CD8-positive, alpha-beta memory T cell (primary cell): ENCODE measurements at regions of chr2 and their contacts with region 1.

Region 1: GRCh38 chr2:241149925-241150659 is at the start of gene PPP1R7:
- DNase-seq: peak; percentile 92 to 97 (median 93)
- H3K4me3 ChIP-seq: peak within 1 kb of the TSS; percentile 97
- H3K4me3 Mint-ChIP-seq: peak within 1 kb of the TSS; percentile 93 to 100 (median 97)
- H3K27ac ChIP-seq: peak within 1 kb of the TSS; percentile 68
- H3K27ac Mint-ChIP-seq: peak within 1 kb of the TSS; percentile 87 to 99 (median 94)
- H3K4me1 ChIP-seq: peaks cover 26% of the 10 kb centered on the region
- H3K4me1 Mint-ChIP-seq: peaks cover 33 to 58% (median 52%) of the 10 kb centered on the region in 3 donors
- H3K27me3 ChIP-seq: no peaks in the 10 kb centered on the region
- H3K27me3 Mint-ChIP-seq: peaks cover 0 to 3% of the 10 kb centered on the region in 2 donors
- total RNA-seq, gene PPP1R7: 82.6 to 87.2 TPM

Region 2: DNA sequence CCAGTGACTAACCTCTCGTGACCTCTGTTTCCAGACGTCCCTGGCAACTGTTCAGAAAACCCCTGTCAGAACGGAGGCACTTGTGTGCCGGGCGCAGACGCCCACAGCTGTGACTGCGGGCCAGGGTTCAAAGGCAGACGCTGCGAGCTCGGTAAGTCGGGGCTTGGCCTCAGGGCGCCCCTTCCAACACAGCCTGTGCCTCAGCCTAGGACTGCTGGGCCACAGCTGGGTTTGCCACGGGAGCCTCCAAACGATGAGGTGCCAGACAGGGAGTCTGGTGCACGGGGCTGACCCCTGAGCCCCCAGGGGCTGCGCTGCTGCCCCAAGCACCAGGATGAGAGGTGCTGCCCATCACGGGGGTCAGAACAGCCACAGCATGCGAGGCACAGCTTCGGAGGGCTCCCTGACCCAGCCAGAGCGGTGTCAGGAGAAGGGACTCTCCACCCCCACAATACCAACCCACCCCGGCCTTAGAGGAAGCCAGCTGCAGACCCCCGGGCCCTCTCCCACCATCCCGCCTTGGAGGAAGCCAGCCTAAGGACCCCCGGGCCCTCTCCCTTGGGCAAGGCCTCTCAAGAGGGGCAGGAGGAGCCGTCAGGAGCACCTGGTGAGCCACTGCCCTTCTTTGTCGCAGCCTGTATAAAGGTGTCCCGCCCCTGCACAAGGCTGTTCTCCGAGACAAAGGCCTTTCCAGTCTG is 68.3 kb before region 1 on chr2:
- CTCF ChIA-PET with region 1: interaction called, 67 read pairs
- POLR2A ChIA-PET with region 1: interaction called, 22 read pairs
- DNase-seq: no peak
- H3K4me3 ChIP-seq: no peak overlapping the region
- H3K4me3 Mint-ChIP-seq: no peak overlapping the region
- H3K27ac ChIP-seq: no peak overlapping the region
- H3K27ac Mint-ChIP-seq: peak overlapping the region in 5 of 8 donors; percentile 12 to 95 (median 60)
- H3K4me1 ChIP-seq: peaks cover 3% of the 10 kb centered on the region
- H3K4me1 Mint-ChIP-seq: peaks cover 5 to 32% (median 17%) of the 10 kb centered on the region in 3 donors
- H3K27me3 ChIP-seq: no peaks in the 10 kb centered on the region
- H3K27me3 Mint-ChIP-seq: no peaks in the 10 kb centered on the region

Region 3: DNA sequence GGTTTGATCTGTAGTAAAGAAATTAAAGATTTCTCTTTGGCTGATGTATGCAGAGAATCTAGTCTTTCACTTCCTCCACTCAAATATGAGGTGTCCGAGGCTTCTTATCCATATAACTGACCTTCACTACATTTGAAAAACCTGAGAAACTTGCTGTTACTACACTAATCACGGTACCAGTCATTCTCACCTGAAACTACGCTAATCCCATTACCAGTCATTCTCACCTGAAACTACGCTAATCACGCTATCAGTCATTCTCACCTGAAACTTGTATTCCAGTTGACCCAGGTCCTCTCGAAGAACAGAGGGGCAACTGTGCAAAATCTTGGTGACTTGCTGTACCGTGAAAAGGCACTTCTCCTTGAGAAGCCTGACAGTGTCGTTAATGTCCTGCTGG is 53.1 kb before region 1 on chr2:
- CTCF ChIA-PET with region 1: interaction called, 10 read pairs
- POLR2A ChIA-PET with region 1: interaction called, 49 read pairs
- DNase-seq: no peak
- H3K4me3 ChIP-seq: no peak overlapping the region
- H3K4me3 Mint-ChIP-seq: peak overlapping the region in 1 of 7 donors; percentile 61
- H3K27ac ChIP-seq: no peak overlapping the region
- H3K27ac Mint-ChIP-seq: peak overlapping the region; percentile 73 to 94 (median 84)
- H3K4me1 ChIP-seq: peaks cover 58% of the 10 kb centered on the region
- H3K4me1 Mint-ChIP-seq: peaks cover 41 to 84% (median 75%) of the 10 kb centered on the region in 3 donors
- H3K27me3 ChIP-seq: no peaks in the 10 kb centered on the region
- H3K27me3 Mint-ChIP-seq: no peaks in the 10 kb centered on the region

Region 4: GRCh38 chr2:241102239-241102803 is 47.8 kb before region 1 on chr2 and contains the start of gene MTERF4:
- CTCF ChIA-PET with region 1: interaction called, 54 read pairs
- POLR2A ChIA-PET with region 1: interaction called, 49 read pairs
- DNase-seq: peak; percentile 77 to 90 (median 83)
- H3K4me3 ChIP-seq: peak within 1 kb of the TSS; percentile 96
- H3K4me3 Mint-ChIP-seq: peak within 1 kb of the TSS; percentile 95 to 99 (median 97)
- H3K27ac ChIP-seq: peak within 1 kb of the TSS; percentile 77
- H3K27ac Mint-ChIP-seq: peak within 1 kb of the TSS; percentile 94 to 99 (median 98)
- H3K4me1 ChIP-seq: peaks cover 63% of the 10 kb centered on the region
- H3K4me1 Mint-ChIP-seq: peaks cover 31 to 86% (median 56%) of the 10 kb centered on the region in 3 donors
- H3K27me3 ChIP-seq: no peaks in the 10 kb centered on the region
- H3K27me3 Mint-ChIP-seq: no peaks in the 10 kb centered on the region
- total RNA-seq, gene MTERF4: 48.0 to 49.2 TPM

Region 5: GRCh38 chr2:241110607-241111439 is 39.3 kb before region 1 on chr2:
- CTCF ChIA-PET with region 1: interaction called, 54 read pairs
- POLR2A ChIA-PET with region 1: interaction called, 42 read pairs
- DNase-seq: peak in 2 of 5 donors; percentile 41 to 47
- H3K4me3 ChIP-seq: peak overlapping the region; percentile 40
- H3K4me3 Mint-ChIP-seq: peak overlapping the region; percentile 78 to 95 (median 90)
- H3K27ac ChIP-seq: peak overlapping the region; percentile 51
- H3K27ac Mint-ChIP-seq: peak overlapping the region; percentile 80 to 99 (median 96)
- H3K4me1 ChIP-seq: peaks cover 53% of the 10 kb centered on the region
- H3K4me1 Mint-ChIP-seq: peaks cover 48 to 76% (median 48%) of the 10 kb centered on the region in 3 donors
- H3K27me3 ChIP-seq: no peaks in the 10 kb centered on the region
- H3K27me3 Mint-ChIP-seq: no peaks in the 10 kb centered on the region

Region 6: DNA sequence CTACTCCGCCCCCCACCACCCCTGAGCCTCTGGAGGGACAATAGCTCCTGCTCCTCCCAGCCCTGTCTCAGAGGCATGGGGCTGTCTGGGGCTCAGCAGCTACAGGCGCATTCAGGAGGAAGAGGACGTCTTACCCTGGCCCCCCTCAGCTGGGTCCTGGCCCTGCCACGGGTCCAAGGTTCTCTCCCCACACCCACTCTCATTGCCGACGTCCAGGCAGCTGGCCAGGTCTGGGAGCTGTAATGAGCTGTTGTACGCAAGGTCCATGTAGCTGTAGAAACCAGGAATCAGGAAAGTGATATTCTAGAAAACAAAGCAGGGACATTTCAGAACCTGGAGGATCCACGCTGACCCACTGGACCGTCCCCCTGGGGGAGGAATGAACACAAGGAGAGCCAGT is 14.4 kb before region 1 on chr2:
- CTCF ChIA-PET with region 1: interaction called, 10 read pairs
- POLR2A ChIA-PET with region 1: interaction called, 3 read pairs
- DNase-seq: no peak
- H3K4me3 ChIP-seq: no peak overlapping the region
- H3K4me3 Mint-ChIP-seq: no peak overlapping the region
- H3K27ac ChIP-seq: no peak overlapping the region
- H3K27ac Mint-ChIP-seq: peak overlapping the region in 2 of 8 donors; percentile 27 to 63
- H3K4me1 ChIP-seq: no peaks in the 10 kb centered on the region
- H3K4me1 Mint-ChIP-seq: no peaks in the 10 kb centered on the region
- H3K27me3 ChIP-seq: no peaks in the 10 kb centered on the region
- H3K27me3 Mint-ChIP-seq: no peaks in the 10 kb centered on the region

Region 7: GRCh38 chr2:241161646-241162281 is 11.7 kb after region 1 on chr2:
- CTCF ChIA-PET with region 1: no interaction called
- POLR2A ChIA-PET with region 1: no interaction called
- DNase-seq: no peak
- H3K4me3 ChIP-seq: no peak overlapping the region
- H3K4me3 Mint-ChIP-seq: no peak overlapping the region
- H3K27ac ChIP-seq: no peak overlapping the region
- H3K27ac Mint-ChIP-seq: peak overlapping the region in 3 of 8 donors; percentile 13 to 79 (median 39)
- H3K4me1 ChIP-seq: no peaks in the 10 kb centered on the region
- H3K4me1 Mint-ChIP-seq: peaks cover under 1 to 7% (median 2%) of the 10 kb centered on the region in 3 donors
- H3K27me3 ChIP-seq: no peaks in the 10 kb centered on the region
- H3K27me3 Mint-ChIP-seq: no peaks in the 10 kb centered on the region

Region 8: DNA sequence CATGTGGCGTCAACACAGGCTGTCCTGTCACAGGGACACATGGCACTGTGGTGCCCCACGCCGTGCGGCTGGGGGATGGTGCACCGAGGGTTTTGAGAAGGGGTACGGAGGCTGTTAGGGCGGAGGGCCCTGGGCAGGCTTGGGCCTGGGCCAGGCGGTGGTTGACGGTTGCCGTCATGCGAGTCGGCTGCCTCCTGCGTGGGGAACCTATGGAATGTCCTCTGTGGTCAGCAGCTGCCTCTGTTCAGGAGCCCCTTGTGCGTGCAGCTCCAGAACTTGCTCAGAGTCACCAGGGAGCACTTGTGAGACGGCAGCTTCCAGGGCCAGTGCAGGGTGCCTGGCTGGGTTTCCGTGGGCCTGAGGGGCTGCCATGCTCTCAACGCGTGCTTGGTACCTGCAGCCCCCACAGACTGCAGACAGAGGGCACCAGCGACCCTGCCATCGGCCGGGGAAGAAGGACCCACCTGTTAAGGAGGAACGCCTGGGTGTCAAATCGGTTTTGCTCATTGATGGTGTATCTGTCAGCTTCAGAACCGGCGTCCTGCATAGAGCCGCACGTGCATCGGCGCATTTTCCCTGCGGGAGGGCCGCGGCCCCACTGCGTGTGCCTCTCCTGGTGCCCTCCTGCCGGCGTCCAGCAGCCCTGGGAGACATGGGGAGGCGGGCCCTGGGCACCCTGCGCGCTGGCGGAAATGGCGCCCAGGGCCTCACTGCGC is 574.3 kb after region 1 on chr2:
- CTCF ChIA-PET with region 1: no interaction called
- POLR2A ChIA-PET with region 1: no interaction called
- DNase-seq: peak; percentile 17 to 64 (median 25)
- H3K4me3 ChIP-seq: no peak overlapping the region
- H3K4me3 Mint-ChIP-seq: no peak overlapping the region
- H3K27ac ChIP-seq: no peak overlapping the region
- H3K27ac Mint-ChIP-seq: no peak overlapping the region
- H3K4me1 ChIP-seq: no peaks in the 10 kb centered on the region
- H3K4me1 Mint-ChIP-seq: no peaks in the 10 kb centered on the region
- H3K27me3 ChIP-seq: no peaks in the 10 kb centered on the region
- H3K27me3 Mint-ChIP-seq: no peaks in the 10 kb centered on the region